AG04450 (cell line): ENCODE measurements at regions of chr5 and their contacts with region 1.

Region 1: DNA sequence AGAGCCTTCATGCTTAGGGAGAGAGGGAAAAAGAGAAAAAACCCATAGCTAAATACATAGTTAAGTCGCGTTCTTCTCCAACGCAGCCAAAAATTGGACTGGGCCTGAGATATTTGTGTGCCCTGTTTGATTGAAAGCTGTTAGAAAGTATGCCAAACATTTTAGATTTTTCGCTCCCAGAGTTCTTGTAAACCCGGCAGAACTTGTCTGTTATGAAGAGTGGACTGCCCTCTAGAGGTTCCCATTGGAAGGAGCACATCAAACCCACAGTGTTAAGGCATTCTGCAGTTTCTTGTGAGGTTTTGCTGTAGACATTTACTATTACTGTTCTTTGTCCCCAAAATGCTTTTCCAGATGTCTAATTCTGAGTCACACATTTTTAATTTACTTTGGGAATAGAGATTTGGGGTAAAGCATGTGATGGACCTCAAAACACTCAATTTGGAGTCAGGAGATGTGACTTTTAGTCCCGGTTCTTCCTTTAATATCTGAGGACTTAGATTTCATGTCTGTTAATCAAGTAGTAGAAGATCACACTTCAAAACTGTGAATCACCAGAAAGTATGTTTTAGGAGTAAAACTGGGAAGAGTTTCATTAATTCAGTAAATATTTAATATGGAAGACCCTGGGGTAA is 96.6 kb downstream of the PCSK1 start:
- DNase-seq: peak; percentile 80
- H3K4me3 ChIP-seq: no peak overlapping the region
- H3K27ac ChIP-seq: no peak overlapping the region
- H3K27me3 ChIP-seq: no peaks in the 10 kb centered on the region
- CTCF ChIP-seq: peak; percentile 97

Region 2: GRCh38 chr5:95858661-95859326 is 477.7 kb before region 1 on chr5:
- CTCF ChIA-PET with region 1: interaction called, 10 read pairs
- POLR2A ChIA-PET with region 1: interaction called, 3 read pairs
- DNase-seq: peak; percentile 98
- H3K4me3 ChIP-seq: peak overlapping the region; percentile 28
- H3K27ac ChIP-seq: peak overlapping the region; percentile 100
- H3K27me3 ChIP-seq: no peaks in the 10 kb centered on the region
- CTCF ChIP-seq: peak; percentile 98

Region 3: GRCh38 chr5:95960667-95961616 is 375.5 kb before region 1 on chr5:
- CTCF ChIA-PET with region 1: interaction called, 18 read pairs
- POLR2A ChIA-PET with region 1: interaction called, 3 read pairs
- DNase-seq: peak; percentile 43
- H3K4me3 ChIP-seq: peak overlapping the region; percentile 100
- H3K27ac ChIP-seq: peak overlapping the region; percentile 91
- H3K27me3 ChIP-seq: no peaks in the 10 kb centered on the region
- CTCF ChIP-seq: peak; percentile 57

Region 4: DNA sequence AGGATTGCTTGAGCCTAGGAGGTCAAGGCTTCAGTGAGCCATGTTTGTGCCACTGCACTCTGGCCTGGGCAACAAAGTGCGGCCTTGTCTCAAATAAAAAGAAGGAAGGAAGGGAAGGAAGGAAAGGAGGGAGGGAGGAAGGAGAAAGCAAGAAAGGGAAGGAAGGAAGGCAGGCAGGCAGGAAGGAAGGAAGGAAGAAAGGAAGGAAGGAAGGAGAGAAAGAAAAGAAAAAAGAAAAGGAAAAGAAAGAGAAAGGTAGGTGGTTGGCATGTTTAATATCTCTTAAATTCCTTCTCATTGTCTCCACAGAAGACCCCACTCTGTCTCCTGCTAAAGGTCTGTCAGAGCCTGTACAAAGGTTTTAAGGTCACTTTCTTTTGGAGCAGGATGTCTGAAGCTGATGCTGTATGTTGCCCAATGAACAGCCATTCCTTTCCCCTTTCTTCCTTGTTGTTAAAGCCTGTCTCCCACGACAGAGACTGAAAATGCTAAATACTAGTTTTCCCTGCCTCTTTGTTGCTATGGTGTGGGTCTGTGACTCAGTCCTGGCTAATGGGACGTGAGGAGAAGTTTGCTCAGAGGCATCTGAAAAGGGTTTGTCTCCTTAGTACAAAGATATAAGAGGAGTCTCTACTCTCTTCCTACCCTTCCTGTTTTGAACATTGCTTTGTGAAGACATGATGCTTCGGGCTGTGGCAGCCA is 116.7 kb before region 1 on chr5:
- CTCF ChIA-PET with region 1: interaction called, 12 read pairs
- POLR2A ChIA-PET with region 1: no interaction called
- DNase-seq: no peak
- H3K4me3 ChIP-seq: no peak overlapping the region
- H3K27ac ChIP-seq: peak overlapping the region; percentile 91
- H3K27me3 ChIP-seq: no peaks in the 10 kb centered on the region
- CTCF ChIP-seq: no peak

Region 5: DNA sequence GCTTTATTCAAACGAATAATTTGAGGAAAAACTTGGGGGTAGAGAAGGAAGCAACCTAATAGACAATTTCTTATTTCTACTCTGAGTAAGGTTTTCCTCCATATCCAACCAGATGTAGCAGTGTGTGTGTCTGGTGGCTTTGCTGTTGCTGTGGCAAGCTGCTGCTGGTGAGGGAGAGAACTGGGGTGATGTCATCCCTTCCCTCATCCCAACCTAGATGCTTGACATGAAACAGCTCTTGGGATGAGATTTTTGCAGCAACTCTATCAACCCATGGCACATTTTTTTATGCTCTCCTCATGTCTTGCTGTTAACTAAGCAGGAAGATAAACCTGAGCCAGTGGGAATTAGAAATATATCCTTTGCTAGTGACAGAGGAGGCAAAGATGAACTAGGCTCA is 39.2 kb before region 1 on chr5:
- CTCF ChIA-PET with region 1: interaction called, 22 read pairs
- POLR2A ChIA-PET with region 1: interaction called, 8 read pairs
- DNase-seq: peak; percentile 89
- H3K4me3 ChIP-seq: no peak overlapping the region
- H3K27ac ChIP-seq: peak overlapping the region; percentile 85
- H3K27me3 ChIP-seq: no peaks in the 10 kb centered on the region
- CTCF ChIP-seq: no peak

Region 6: GRCh38 chr5:96626956-96627355 is 290.5 kb after region 1 on chr5:
- CTCF ChIA-PET with region 1: no interaction called
- POLR2A ChIA-PET with region 1: no interaction called
- DNase-seq: peak; percentile 43
- H3K4me3 ChIP-seq: no peak overlapping the region
- H3K27ac ChIP-seq: no peak overlapping the region
- H3K27me3 ChIP-seq: no peaks in the 10 kb centered on the region
- CTCF ChIP-seq: no peak